Activated CD4-positive, alpha-beta memory T cell treated with anti-CD3 and anti-CD28 coated beads for 36 hours (primary cell): ENCODE measurements at regions of chr4 and their contacts with region 1.

Region 1: DNA sequence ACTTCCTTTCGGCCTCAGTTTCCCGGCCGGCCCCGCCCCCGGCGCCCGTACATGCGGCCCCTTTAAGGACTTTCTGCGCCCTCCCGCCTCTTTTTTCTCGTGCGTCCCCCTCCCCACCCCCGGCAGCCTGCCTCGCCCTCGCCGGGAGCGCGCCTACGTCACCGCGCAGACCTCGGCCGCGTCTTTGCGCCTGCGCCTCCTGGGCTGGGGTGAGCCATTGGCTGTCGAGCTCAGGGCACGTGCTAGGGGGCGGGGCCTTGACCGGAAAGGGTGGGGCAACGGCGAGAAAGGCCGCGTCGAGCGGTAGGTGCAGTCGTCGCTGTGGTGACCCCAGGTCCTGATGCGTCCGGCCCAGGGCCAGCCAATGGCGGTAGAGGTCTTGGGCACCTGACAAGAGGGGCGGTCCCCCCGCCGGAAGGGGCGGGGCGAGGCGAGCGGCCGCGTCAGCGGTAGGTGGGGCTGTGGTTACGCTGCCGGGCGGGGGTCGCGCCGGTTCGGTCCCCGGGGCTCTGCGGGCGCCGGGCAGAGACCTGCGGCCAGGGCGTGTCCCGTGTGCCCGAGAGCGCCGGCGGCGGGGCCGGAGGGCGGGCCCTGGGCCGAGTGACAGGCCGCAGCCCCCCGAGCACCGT is at the start of gene UVSSA:
- DNase-seq: peak; percentile 100
- H3K4me3 Mint-ChIP-seq: peak within 1 kb of the TSS; percentile 82
- H3K27ac Mint-ChIP-seq: peak within 1 kb of the TSS; percentile 90
- H3K4me1 Mint-ChIP-seq: peaks cover 50% of the 10 kb centered on the region
- H3K27me3 Mint-ChIP-seq: no peaks in the 10 kb centered on the region
- total RNA-seq, gene UVSSA: 20.2 to 21.5 TPM

Region 2: DNA sequence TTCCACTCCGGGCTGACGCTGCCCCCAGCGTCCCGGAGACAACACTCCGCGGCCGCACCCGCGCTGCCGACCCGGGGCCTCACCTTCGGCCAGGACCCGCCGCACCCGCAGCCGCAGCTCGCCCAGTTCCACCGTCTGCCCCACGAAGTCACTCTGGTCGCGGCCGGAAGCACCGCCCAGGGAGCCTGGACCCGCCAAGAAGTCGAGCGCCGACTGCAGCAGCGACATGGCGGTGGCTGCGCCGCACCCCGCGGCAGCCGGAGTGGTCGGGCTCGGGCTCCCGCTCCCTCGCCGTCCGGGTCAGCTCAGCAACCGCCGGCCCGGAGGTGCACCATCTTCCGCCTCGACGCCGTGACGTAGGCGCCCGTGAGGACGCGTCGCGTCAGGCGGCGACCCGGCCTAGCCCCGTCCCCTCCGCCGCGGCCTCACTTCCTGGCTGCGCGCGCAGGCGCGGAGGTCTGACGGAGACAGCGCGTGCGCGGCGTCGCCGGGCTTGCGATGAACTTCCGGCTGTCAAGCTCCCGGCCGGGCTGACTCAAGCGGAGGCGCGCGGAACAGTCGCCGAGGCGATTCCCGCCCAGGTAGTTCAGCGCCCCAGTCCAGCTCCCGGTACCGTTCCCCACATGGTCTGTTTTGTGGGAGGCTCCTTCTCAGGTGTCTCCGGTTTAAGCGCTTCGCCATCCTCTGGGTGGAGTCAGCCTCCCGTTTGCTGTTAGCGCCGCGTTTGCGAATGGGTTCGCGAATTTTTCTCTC is 414.8 kb before region 1 on chr4 and contains the starts of genes GAK and TMEM175:
- CTCF ChIA-PET with region 1: no interaction called
- POLR2A ChIA-PET with region 1: no interaction called
- intact Hi-C with region 1: loop called (anchors 2 kb)
- DNase-seq: peak; percentile 98
- H3K4me3 Mint-ChIP-seq: peak within 1 kb of the TSS; percentile 97
- H3K27ac Mint-ChIP-seq: peak within 1 kb of the TSS; percentile 80
- H3K4me1 Mint-ChIP-seq: peaks cover 43% of the 10 kb centered on the region
- H3K27me3 Mint-ChIP-seq: no peaks in the 10 kb centered on the region
- total RNA-seq, gene GAK: 97.0 to 101 TPM
- total RNA-seq, gene TMEM175: 13.8 to 15.8 TPM

Region 3: GRCh38 chr4:1167247-1167949 is 179.5 kb before region 1 on chr4:
- CTCF ChIA-PET with region 1: interaction called, 4 read pairs
- POLR2A ChIA-PET with region 1: interaction called, 3 read pairs
- intact Hi-C with region 1: loop called (anchors 1 kb)
- DNase-seq: peak; percentile 94
- H3K4me3 Mint-ChIP-seq: peak overlapping the region; percentile 74
- H3K27ac Mint-ChIP-seq: no peak overlapping the region
- H3K4me1 Mint-ChIP-seq: peaks cover 17% of the 10 kb centered on the region
- H3K27me3 Mint-ChIP-seq: peaks cover 12% of the 10 kb centered on the region

Region 4: GRCh38 chr4:1249148-1249730 is 97.7 kb before region 1 on chr4:
- CTCF ChIA-PET with region 1: interaction called, 3 read pairs
- POLR2A ChIA-PET with region 1: interaction called, 45 read pairs
- intact Hi-C with region 1: loop called (anchors 1 kb)
- DNase-seq: peak; percentile 85
- H3K4me3 Mint-ChIP-seq: peak overlapping the region; percentile 85
- H3K27ac Mint-ChIP-seq: peak overlapping the region; percentile 96
- H3K4me1 Mint-ChIP-seq: peaks cover 69% of the 10 kb centered on the region
- H3K27me3 Mint-ChIP-seq: no peaks in the 10 kb centered on the region

Region 5: GRCh38 chr4:1289207-1290164 is 57.4 kb before region 1 on chr4 and contains the start of gene MAEA:
- CTCF ChIA-PET with region 1: interaction called, 10 read pairs
- POLR2A ChIA-PET with region 1: interaction called, 25 read pairs
- intact Hi-C with region 1: loop called (anchors 1 kb)
- DNase-seq: peak; percentile 99
- H3K4me3 Mint-ChIP-seq: peak within 1 kb of the TSS; percentile 96
- H3K27ac Mint-ChIP-seq: peak within 1 kb of the TSS; percentile 87
- H3K4me1 Mint-ChIP-seq: peaks cover 31% of the 10 kb centered on the region
- H3K27me3 Mint-ChIP-seq: no peaks in the 10 kb centered on the region
- total RNA-seq, gene MAEA: 47.3 to 50.3 TPM

Region 6: GRCh38 chr4:1329408-1330371 is 17.2 kb before region 1 on chr4:
- CTCF ChIA-PET with region 1: interaction called, 5 read pairs
- POLR2A ChIA-PET with region 1: interaction called, 6 read pairs
- intact Hi-C with region 1: loop called (anchors 2 kb)
- DNase-seq: peak; percentile 44
- H3K4me3 Mint-ChIP-seq: peak overlapping the region; percentile 32
- H3K27ac Mint-ChIP-seq: peak overlapping the region; percentile 83
- H3K4me1 Mint-ChIP-seq: peaks cover 39% of the 10 kb centered on the region
- H3K27me3 Mint-ChIP-seq: no peaks in the 10 kb centered on the region

Region 7: DNA sequence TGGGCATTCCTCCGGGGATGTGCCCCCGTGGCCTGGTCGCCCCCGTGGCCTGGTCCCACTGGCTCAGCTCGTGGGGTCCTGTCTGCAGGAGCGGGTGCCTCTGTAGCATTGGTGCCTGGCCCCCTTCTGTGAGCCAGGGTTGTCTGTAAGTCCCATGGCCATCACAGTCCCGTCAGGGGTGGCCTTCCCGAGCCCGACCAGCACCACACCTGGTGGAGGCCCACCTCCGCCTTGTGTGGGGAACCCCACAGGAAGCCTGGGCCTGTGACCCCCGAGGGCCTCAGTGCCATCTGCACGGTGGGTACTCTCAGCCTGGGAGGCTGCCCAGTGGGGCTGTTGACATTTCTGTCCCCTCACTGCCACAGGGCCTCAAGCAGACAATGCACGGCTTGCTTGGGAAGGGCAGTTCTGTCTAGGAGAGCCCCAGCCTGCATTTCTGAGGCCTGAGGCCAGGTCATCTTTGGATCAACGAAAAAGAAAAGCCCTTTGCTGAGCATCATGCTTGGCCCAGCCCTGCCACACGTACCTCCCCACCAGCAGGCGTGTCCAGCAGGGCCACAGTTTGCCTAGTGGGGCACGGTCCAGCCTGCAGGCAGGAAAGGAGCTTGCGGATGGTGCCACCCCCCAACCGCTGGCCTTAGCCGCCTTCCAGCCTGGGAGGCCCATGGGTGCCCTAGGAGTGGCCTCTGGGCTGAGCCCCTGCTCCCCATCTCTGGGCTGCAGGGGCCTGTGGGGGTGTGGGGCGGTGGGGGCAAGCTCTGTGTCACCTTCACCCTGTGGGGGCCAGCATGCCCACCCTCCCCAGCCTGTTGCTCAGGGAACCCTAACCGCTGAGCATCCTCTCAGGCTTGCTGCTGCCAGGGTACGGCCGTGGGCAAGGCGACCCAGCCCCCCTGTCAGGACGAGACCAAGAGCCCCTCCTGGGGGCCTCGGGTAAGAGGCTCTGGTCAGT is 36.2 kb after region 1 on chr4:
- CTCF ChIA-PET with region 1: no interaction called
- POLR2A ChIA-PET with region 1: no interaction called
- intact Hi-C with region 1: no loop called
- DNase-seq: no peak
- H3K4me3 Mint-ChIP-seq: no peak overlapping the region
- H3K27ac Mint-ChIP-seq: no peak overlapping the region
- H3K4me1 Mint-ChIP-seq: no peaks in the 10 kb centered on the region
- H3K27me3 Mint-ChIP-seq: no peaks in the 10 kb centered on the region

Region 8: DNA sequence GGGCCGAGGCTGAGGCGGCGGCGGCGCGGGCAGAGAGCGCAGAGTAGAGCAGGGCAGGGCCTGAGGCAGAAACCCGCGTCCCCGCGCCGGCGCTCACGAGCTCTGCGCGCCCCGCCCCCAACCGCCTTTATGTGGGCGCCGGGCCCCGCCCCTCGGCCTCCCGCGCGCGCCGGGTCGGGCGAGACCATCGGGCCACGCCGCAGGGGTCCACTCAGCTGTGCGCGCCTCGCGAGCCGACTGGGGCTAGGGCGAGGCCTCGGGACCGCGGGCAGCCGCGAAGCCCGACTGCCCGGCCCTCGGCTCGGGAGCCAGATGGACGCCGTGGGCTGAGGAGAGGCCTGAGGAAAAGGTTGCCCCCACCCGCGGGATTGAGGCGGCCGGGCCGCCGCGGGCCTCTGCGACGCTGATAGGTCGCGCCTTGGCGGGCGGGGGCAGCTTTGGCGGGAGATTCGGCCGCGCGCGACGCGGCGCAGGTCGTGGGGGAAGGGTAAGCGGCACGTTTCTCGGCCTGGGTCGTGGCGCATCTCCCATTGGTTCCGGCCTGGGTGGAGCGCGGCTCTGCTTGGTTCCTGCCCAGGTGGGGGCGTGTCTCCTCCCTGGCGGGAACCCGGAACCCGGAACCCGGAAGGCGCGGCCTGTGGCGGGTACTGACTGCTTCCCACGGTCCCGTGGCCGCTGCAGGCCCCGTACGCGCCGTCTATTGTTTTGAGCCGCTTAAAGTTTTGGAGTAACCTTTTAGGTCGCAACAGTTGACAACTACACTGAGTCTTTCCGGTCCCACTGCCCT is 365.5 kb after region 1 on chr4 and contains the start of gene SLBP:
- CTCF ChIA-PET with region 1: no interaction called
- POLR2A ChIA-PET with region 1: no interaction called
- intact Hi-C with region 1: loop called (anchors 2 kb)
- DNase-seq: peak; percentile 99
- H3K4me3 Mint-ChIP-seq: peak within 1 kb of the TSS; percentile 99
- H3K27ac Mint-ChIP-seq: peak within 1 kb of the TSS; percentile 94
- H3K4me1 Mint-ChIP-seq: peaks cover 61% of the 10 kb centered on the region
- H3K27me3 Mint-ChIP-seq: no peaks in the 10 kb centered on the region
- total RNA-seq, gene SLBP: 103 to 106 TPM